Adrenal gland (tissue), 19 donors: ENCODE measurements at regions of chr5 and their contacts with region 1.

Region 1: DNA sequence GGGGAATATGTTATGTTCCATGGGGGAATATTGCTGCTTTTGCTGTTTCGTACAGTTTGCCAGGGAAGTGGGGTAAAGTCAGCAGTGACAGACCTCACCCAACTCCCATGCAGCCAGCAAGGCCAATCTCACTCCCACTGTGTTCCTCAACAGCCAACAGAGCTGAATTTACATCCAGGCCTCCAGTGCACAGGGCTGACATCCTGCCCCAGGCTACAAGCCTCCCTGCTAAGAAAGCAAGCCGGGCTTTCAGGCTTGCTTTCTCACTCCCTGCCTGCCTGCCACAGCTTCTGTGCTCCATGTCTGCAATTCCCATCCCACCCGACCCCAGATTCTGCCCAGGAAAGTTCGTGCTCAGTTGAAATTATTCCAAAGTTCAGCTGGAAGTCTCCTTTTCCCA is 25.5 kb upstream of the SNCAIP start:
- DNase-seq: no peak
- H3K4me3 ChIP-seq: no peak overlapping the region
- H3K27ac ChIP-seq: no peak overlapping the region
- H3K4me1 ChIP-seq: no peaks in the 10 kb centered on the region
- H3K27me3 ChIP-seq: no peaks in the 10 kb centered on the region
- CTCF ChIP-seq: no peak
- POLR2A ChIP-seq: no peak

Region 2: DNA sequence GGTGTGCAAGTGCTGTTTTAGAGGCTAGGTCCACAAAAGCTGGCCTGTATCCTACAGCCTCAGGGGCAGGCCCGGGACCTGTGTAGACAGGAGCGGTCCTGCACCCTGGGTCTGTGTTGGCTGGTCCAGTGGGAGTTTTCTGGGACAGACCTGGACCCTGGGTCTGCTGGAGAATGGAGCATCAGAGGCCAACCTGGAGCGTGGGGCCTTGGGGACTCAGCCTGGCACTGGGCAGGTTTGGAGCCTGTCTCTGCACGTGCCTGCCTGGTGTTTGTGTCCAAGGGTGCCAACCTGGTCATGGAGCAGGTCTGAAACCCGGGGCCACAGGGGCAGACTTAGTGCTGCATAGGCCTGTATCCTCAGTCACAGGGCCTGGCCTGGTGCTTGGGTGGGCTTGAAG is 279.0 kb before region 1 on chr5:
- intact Hi-C with region 1: no loop called
- DNase-seq: no peak
- H3K4me3 ChIP-seq: no peak overlapping the region
- H3K27ac ChIP-seq: no peak overlapping the region
- H3K4me1 ChIP-seq: no peaks in the 10 kb centered on the region
- H3K27me3 ChIP-seq: no peaks in the 10 kb centered on the region
- CTCF ChIP-seq: no peak
- POLR2A ChIP-seq: no peak

Region 3: GRCh38 chr5:122332589-122333555 is 46.3 kb after region 1 on chr5:
- intact Hi-C with region 1: no loop called
- DNase-seq: peak in 3 of 7 donors; percentile 20 to 28 (median 24)
- H3K4me3 ChIP-seq: no peak overlapping the region
- H3K27ac ChIP-seq: no peak overlapping the region
- H3K4me1 ChIP-seq: peaks cover 4 to 8% of the 10 kb centered on the region in 2 donors
- H3K27me3 ChIP-seq: no peaks in the 10 kb centered on the region
- CTCF ChIP-seq: no peak
- POLR2A ChIP-seq: no peak

Region 4: GRCh38 chr5:122421374-122422079 is 135.0 kb after region 1 on chr5:
- intact Hi-C with region 1: loop called in 1 of 2 experiments (anchors 10 kb)
- DNase-seq: no peak
- H3K4me3 ChIP-seq: no peak overlapping the region
- H3K27ac ChIP-seq: no peak overlapping the region
- H3K4me1 ChIP-seq: no peaks in the 10 kb centered on the region
- H3K27me3 ChIP-seq: no peaks in the 10 kb centered on the region
- CTCF ChIP-seq: no peak
- POLR2A ChIP-seq: no peak